CD8-positive, alpha-beta memory T cell (primary cell): ENCODE measurements at regions of chr5 and their contacts with region 1.

Region 1: GRCh38 chr5:43484106-43484849 is 613 bp upstream of the TMEM267 start:
- DNase-seq: peak; percentile 70 to 91 (median 83)
- H3K4me3 ChIP-seq: peak overlapping the region; percentile 61
- H3K4me3 Mint-ChIP-seq: peak overlapping the region; percentile 94 to 99 (median 98)
- H3K27ac ChIP-seq: peak overlapping the region; percentile 96
- H3K27ac Mint-ChIP-seq: peak overlapping the region; percentile 99 to 100 (median 100)
- H3K4me1 ChIP-seq: peaks cover 32% of the 10 kb centered on the region
- H3K4me1 Mint-ChIP-seq: peaks cover 31 to 53% (median 50%) of the 10 kb centered on the region in 3 donors
- H3K27me3 ChIP-seq: no peaks in the 10 kb centered on the region
- H3K27me3 Mint-ChIP-seq: no peaks in the 10 kb centered on the region

Region 2: GRCh38 chr5:42950440-42951292 is 533.6 kb before region 1 on chr5:
- CTCF ChIA-PET with region 1: no interaction called
- POLR2A ChIA-PET with region 1: interaction called, 10 read pairs
- DNase-seq: peak; percentile 43 to 81 (median 61)
- H3K4me3 ChIP-seq: peak overlapping the region; percentile 97
- H3K4me3 Mint-ChIP-seq: peak overlapping the region; percentile 91 to 98 (median 95)
- H3K27ac ChIP-seq: peak overlapping the region; percentile 98
- H3K27ac Mint-ChIP-seq: peak overlapping the region; percentile 99 to 100 (median 100)
- H3K4me1 ChIP-seq: peaks cover 27% of the 10 kb centered on the region
- H3K4me1 Mint-ChIP-seq: peaks cover 29 to 50% (median 39%) of the 10 kb centered on the region in 3 donors
- H3K27me3 ChIP-seq: no peaks in the 10 kb centered on the region
- H3K27me3 Mint-ChIP-seq: peaks cover 0 to 16% of the 10 kb centered on the region in 2 donors

Region 3: DNA sequence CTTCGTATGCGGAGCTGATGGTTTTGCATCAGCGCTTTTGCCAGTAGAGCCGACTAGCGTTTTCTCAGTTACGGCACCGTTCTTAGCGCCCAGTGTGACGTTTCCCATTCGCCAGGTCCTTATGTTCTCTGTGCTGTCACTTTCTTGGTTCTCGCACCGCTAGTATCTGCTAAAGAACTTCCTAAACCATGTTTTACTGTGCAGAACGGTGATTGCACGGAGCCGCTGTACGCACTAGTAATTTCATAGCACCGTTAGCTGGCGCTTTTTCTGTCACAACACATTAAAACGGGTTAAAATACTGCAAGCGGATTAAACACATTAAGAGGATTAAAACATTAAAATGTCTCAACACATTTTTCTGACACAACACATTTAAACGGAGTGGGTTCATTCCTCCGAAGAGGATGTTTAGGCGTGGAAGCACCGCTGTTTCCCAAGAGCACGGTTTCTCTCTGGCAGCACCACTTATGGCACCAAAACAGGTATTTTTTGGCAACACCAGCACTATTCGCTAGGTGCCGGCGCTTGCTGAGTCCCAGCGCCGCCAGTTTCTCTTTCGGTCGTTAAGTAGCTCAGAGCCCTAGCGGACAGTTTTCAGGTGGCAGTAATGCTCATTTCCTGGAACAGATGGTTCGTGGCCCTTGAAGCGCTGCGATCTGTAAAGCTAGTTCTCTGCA is 464.5 kb before region 1 on chr5:
- CTCF ChIA-PET with region 1: interaction called, 3 read pairs
- POLR2A ChIA-PET with region 1: interaction called, 28 read pairs
- DNase-seq: peak; percentile 75 to 93 (median 87)
- H3K4me3 ChIP-seq: peak overlapping the region; percentile 87
- H3K4me3 Mint-ChIP-seq: peak overlapping the region; percentile 97 to 100 (median 99)
- H3K27ac ChIP-seq: peak overlapping the region; percentile 96
- H3K27ac Mint-ChIP-seq: peak overlapping the region; percentile 98 to 100 (median 100)
- H3K4me1 ChIP-seq: peaks cover 36% of the 10 kb centered on the region
- H3K4me1 Mint-ChIP-seq: peaks cover 40 to 56% (median 54%) of the 10 kb centered on the region in 3 donors
- H3K27me3 ChIP-seq: no peaks in the 10 kb centered on the region
- H3K27me3 Mint-ChIP-seq: peaks cover 0 to 8% of the 10 kb centered on the region in 2 donors

Region 4: DNA sequence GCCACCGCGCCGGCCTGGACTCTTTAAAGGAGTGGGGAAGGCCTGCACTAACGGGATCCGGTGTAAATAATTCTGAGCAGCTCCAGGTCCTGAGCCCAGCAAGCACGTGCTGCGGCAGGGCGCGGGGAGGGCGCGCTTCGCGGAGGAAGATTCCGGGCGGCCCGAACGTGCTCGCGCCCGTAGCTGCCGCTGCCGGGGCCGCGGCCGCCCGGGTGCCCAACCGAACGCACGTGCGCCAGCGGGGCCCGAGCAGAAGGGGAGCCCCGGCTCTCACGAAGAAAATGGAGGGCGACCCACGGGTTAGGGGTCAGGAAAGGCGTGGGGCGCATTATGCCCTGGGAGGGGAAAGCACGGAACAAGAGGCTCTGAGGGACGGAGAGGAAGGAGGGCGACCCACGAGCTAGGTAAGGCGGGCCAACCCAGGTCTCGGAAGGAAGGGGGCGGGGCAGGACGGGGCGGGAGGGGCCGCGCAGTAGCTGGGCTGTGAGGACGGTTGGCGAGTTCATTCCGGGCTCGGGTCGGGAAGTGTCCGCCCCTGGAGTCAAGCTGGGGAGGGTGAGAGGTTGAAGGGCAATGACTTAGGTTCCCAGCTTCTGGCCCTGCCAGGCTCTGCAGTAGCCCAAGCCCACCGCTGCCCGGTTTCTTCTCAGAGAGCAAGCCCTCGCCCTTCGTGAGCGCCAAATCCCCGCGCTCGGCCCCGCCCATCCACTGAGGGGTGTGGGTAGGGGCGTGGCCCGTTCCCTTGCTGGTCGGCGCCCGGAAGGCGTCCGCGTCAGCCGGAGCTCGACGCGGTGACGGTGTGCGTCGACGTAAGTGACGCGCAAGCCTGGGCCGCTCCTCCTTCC is 363.3 kb before region 1 on chr5 and contains the start of gene ZNF131:
- CTCF ChIA-PET with region 1: interaction called, 15 read pairs
- POLR2A ChIA-PET with region 1: interaction called, 42 read pairs
- DNase-seq: peak; percentile 94 to 99 (median 96)
- H3K4me3 ChIP-seq: peak within 1 kb of the TSS; percentile 89
- H3K4me3 Mint-ChIP-seq: peak within 1 kb of the TSS; percentile 90 to 99 (median 93)
- H3K27ac ChIP-seq: peak within 1 kb of the TSS; percentile 97
- H3K27ac Mint-ChIP-seq: peak within 1 kb of the TSS; percentile 84 to 99 (median 96)
- H3K4me1 ChIP-seq: peaks cover 45% of the 10 kb centered on the region
- H3K4me1 Mint-ChIP-seq: peaks cover 33 to 43% (median 40%) of the 10 kb centered on the region in 3 donors
- H3K27me3 ChIP-seq: no peaks in the 10 kb centered on the region
- H3K27me3 Mint-ChIP-seq: no peaks in the 10 kb centered on the region
- total RNA-seq, gene ZNF131: 39.2 to 39.5 TPM

Region 5: DNA sequence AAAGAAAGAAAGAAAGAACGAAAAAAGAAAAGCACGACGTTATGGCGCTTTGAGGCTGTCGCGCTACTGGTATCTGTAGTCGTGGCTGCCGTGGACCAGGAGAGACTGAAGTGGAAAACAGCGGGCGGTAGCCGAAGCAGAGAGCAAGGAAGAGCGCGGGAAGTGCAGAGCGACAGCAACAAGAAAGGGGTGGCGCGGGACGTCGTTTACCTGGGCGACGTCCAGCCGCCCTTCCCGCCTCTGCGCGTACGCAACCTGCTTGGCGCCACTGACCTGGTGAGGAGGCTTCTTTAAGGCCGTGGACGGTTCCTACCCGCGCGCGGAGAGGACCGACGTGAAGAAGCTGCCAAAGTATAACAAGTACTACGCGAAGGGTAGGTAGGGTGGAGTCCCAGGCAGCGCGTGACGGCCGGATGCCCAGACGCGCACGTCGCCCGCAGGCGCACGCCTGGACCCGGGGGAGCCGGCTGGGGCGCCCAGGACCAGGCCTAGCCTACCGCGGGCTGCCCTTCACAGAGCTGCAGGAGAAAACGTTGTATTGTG is 87.4 kb before region 1 on chr5:
- CTCF ChIA-PET with region 1: interaction called, 8 read pairs
- POLR2A ChIA-PET with region 1: interaction called, 21 read pairs
- DNase-seq: peak; percentile 26 to 74 (median 58)
- H3K4me3 ChIP-seq: peak overlapping the region; percentile 82
- H3K4me3 Mint-ChIP-seq: peak overlapping the region; percentile 90 to 99 (median 96)
- H3K27ac ChIP-seq: peak overlapping the region; percentile 48
- H3K27ac Mint-ChIP-seq: peak overlapping the region; percentile 57 to 98 (median 93)
- H3K4me1 ChIP-seq: peaks cover 13% of the 10 kb centered on the region
- H3K4me1 Mint-ChIP-seq: peaks cover 26 to 48% (median 43%) of the 10 kb centered on the region in 3 donors
- H3K27me3 ChIP-seq: no peaks in the 10 kb centered on the region
- H3K27me3 Mint-ChIP-seq: peaks cover 4 to 7% of the 10 kb centered on the region in 2 donors

Region 6: DNA sequence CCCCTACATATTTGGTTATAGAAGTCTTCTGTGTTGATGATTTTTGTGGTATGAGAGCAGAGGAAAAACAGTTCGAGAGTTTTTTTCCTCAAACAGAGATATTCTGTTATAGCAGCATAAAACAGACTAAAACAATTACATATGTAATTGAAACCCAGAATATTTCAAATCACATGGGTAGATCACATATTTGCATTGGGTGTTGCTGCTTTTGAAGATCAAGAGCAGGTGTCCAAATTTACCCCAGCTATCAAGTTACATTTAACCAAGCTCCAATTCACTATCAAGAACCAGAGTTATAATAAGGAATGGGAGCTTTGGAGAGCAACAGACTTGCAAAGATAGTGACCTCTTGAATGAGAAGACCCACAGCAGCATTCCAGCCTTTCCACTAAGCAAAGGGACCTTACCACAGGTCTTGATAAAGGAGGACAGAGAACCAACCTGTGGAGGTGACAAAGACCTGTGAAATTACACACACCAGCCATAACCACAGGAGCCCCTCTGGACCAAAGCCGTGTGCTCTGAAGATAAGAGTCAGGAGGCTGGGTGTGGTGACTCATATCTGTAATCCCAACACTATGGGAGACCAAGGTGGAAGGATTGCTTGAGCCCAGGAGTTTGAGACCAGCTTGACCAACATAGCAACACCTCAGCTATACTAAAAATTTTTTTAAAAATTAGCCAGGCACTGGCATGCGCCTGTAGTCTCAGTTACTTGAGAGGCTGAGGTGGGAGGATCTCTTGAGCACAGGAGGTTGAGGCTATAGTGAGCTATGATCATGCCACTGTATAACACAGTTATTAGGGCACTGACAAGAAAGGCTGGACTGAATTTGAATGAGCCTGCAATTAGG is 68.1 kb before region 1 on chr5:
- CTCF ChIA-PET with region 1: no interaction called
- POLR2A ChIA-PET with region 1: no interaction called
- DNase-seq: no peak
- H3K4me3 ChIP-seq: no peak overlapping the region
- H3K4me3 Mint-ChIP-seq: no peak overlapping the region
- H3K27ac ChIP-seq: no peak overlapping the region
- H3K27ac Mint-ChIP-seq: no peak overlapping the region
- H3K4me1 ChIP-seq: no peaks in the 10 kb centered on the region
- H3K4me1 Mint-ChIP-seq: no peaks in the 10 kb centered on the region
- H3K27me3 ChIP-seq: no peaks in the 10 kb centered on the region
- H3K27me3 Mint-ChIP-seq: peaks cover 0 to 4% of the 10 kb centered on the region in 2 donors

Region 7: DNA sequence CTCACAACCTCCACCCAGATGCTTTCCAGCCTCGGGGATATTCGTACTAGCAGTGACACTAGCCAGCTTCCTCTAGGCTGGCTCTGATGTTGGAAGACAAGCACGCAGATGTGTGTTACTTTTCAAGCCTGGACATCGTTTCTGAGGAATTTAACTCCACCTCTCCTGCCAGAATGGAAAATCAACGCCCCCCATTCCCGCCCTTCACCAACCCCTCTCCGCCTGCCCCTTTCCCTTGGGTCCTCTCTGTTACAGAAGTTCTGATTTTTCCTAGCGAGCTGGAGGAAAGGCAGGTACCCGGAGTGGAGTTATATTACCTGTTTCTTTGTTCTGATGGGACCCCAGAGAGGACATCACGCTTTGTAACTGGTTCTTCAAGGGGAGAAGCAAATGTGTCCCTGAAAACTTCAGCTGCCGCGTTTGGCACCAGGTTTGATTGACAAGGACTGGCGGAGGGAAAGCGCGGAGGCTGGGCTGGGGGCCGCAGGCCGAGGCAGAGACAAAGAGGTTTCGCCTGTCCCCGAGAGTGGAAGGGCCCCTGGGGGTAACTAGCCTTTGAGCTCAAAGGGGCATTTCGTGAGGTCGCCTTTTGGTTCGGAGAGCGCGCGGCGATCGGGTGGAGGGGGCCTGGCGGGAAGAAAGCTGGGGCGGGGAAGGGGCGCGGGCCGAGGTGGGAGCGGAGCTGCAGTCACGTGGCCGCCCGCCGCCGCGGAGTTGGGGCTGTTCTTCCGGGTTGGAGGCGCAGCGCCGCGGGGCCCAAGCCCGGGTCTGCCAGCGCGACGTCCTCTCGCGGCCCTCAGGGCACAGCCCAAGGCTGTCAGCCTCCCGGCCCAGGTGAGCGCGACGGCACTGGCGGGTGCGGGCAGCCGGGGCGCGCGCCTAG is 118.4 kb after region 1 on chr5 and contains the start of gene NNT:
- CTCF ChIA-PET with region 1: interaction called, 22 read pairs
- POLR2A ChIA-PET with region 1: interaction called, 33 read pairs
- DNase-seq: peak; percentile 73 to 86 (median 76)
- H3K4me3 ChIP-seq: peak within 1 kb of the TSS; percentile 97
- H3K4me3 Mint-ChIP-seq: peak within 1 kb of the TSS; percentile 90 to 98 (median 91)
- H3K27ac ChIP-seq: peak within 1 kb of the TSS; percentile 87
- H3K27ac Mint-ChIP-seq: peak within 1 kb of the TSS; percentile 89 to 99 (median 94)
- H3K4me1 ChIP-seq: peaks cover 32% of the 10 kb centered on the region
- H3K4me1 Mint-ChIP-seq: peaks cover 54 to 68% (median 59%) of the 10 kb centered on the region in 3 donors
- H3K27me3 ChIP-seq: no peaks in the 10 kb centered on the region
- H3K27me3 Mint-ChIP-seq: peaks cover 0 to 2% of the 10 kb centered on the region in 2 donors
- total RNA-seq, gene NNT: 79.7 to 87.3 TPM

Region 8: GRCh38 chr5:43631182-43631910 is 147.1 kb after region 1 on chr5:
- CTCF ChIA-PET with region 1: no interaction called
- POLR2A ChIA-PET with region 1: no interaction called
- DNase-seq: peak in 4 of 5 donors; percentile 2 to 48 (median 28)
- H3K4me3 ChIP-seq: no peak overlapping the region
- H3K4me3 Mint-ChIP-seq: no peak overlapping the region
- H3K27ac ChIP-seq: no peak overlapping the region
- H3K27ac Mint-ChIP-seq: peak overlapping the region in 4 of 8 donors; percentile 17 to 71 (median 30)
- H3K4me1 ChIP-seq: no peaks in the 10 kb centered on the region
- H3K4me1 Mint-ChIP-seq: peaks cover 30 to 58% (median 52%) of the 10 kb centered on the region in 3 donors
- H3K27me3 ChIP-seq: no peaks in the 10 kb centered on the region
- H3K27me3 Mint-ChIP-seq: no peaks in the 10 kb centered on the region

Region 9: DNA sequence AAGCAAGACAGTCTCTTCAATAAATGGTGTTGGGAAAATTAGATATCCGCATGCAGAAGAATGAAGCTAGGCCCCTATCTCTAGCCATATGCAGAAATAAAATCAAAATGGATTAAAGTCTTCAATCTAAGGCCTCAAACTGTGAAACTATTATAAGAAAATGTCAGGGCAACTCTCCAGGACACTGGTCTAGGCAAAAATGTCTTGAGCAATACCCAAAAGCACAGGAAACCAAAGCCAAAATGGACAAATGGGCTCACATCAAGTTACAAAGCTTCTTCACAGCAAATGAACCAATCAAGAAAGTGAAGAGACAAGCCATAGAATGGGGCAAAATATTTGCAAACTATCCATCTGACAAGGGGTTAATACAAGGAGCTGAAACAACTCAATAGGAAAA is 457.5 kb after region 1 on chr5:
- CTCF ChIA-PET with region 1: no interaction called
- POLR2A ChIA-PET with region 1: no interaction called
- DNase-seq: no peak
- H3K4me3 ChIP-seq: no peak overlapping the region
- H3K4me3 Mint-ChIP-seq: no peak overlapping the region
- H3K27ac ChIP-seq: no peak overlapping the region
- H3K27ac Mint-ChIP-seq: no peak overlapping the region
- H3K4me1 ChIP-seq: no peaks in the 10 kb centered on the region
- H3K4me1 Mint-ChIP-seq: no peaks in the 10 kb centered on the region
- H3K27me3 ChIP-seq: no peaks in the 10 kb centered on the region
- H3K27me3 Mint-ChIP-seq: no peaks in the 10 kb centered on the region